Naive thymus-derived CD4-positive, alpha-beta T cell (primary cell): ENCODE measurements at regions of chr2 and their contacts with region 1.

Region 1: GRCh38 chr2:194539425-194539824 is 1117.6 kb upstream of the SLC39A10 start:
- DNase-seq: no peak
- ATAC-seq: no peak
- H3K4me3 ChIP-seq: no peak overlapping the region
- H3K4me3 Mint-ChIP-seq: no peak overlapping the region
- H3K27ac ChIP-seq: no peak overlapping the region
- H3K27ac Mint-ChIP-seq: no peak overlapping the region
- H3K4me1 ChIP-seq: no peaks in the 10 kb centered on the region
- H3K4me1 Mint-ChIP-seq: no peaks in the 10 kb centered on the region
- H3K27me3 ChIP-seq: no peaks in the 10 kb centered on the region
- H3K27me3 Mint-ChIP-seq: peaks cover 0 to 8% (median 3%) of the 10 kb centered on the region in 5 donors

Region 2: DNA sequence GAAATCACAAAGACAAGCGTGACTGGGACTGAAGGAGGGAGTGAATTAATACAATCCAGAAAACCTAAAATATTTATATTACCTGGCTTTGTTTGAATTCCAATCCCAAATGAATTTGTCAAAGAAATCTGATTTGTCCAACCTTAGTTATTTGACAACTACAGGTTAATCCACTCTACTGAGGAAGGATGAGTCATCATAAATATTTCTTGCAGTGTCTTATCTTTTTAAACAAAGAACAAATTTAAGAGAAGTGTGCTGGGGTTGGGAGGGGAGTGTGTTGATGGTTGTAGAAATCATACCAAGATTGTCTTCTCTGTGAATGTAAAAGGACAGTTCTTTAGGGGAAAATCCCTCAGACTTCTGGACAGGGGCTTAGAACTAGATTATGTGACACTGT is 11.3 kb after region 1 on chr2:
- CTCF ChIA-PET with region 1: no interaction called
- POLR2A ChIA-PET with region 1: no interaction called
- intact Hi-C with region 1: no loop called
- DNase-seq: no peak
- ATAC-seq: no peak
- H3K4me3 ChIP-seq: no peak overlapping the region
- H3K4me3 Mint-ChIP-seq: no peak overlapping the region
- H3K27ac ChIP-seq: no peak overlapping the region
- H3K27ac Mint-ChIP-seq: no peak overlapping the region
- H3K4me1 ChIP-seq: no peaks in the 10 kb centered on the region
- H3K4me1 Mint-ChIP-seq: no peaks in the 10 kb centered on the region
- H3K27me3 ChIP-seq: no peaks in the 10 kb centered on the region
- H3K27me3 Mint-ChIP-seq: peaks cover 0 to 6% (median 0%) of the 10 kb centered on the region in 5 donors

Region 3: DNA sequence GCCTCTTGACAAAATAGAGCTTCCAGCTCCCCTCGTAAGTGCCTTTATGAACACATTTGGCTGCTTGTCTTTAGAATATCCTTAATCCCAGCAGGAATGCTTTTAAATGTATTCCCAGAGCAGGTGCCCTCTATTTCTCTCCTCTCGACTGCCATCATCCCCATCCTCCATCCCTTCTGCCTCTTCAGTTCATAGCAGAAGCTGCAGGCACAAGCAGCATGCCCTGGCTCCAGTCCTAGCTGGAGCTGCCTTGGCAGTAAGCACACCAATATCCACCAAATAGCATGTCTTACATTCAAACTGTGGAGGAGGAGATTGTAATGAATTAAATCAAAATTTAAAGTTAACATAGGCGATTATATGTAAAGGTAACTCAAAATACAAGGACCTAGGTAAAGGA is 226.3 kb after region 1 on chr2:
- CTCF ChIA-PET with region 1: no interaction called
- POLR2A ChIA-PET with region 1: no interaction called
- intact Hi-C with region 1: loop called in 1 of 2 experiments (anchors 5 kb)
- DNase-seq: no peak
- ATAC-seq: no peak
- H3K4me3 ChIP-seq: no peak overlapping the region
- H3K4me3 Mint-ChIP-seq: no peak overlapping the region
- H3K27ac ChIP-seq: no peak overlapping the region
- H3K27ac Mint-ChIP-seq: peak overlapping the region in 1 of 9 donors; percentile 42
- H3K4me1 ChIP-seq: no peaks in the 10 kb centered on the region
- H3K4me1 Mint-ChIP-seq: peaks cover 0 to 1% (median 0%) of the 10 kb centered on the region in 7 donors
- H3K27me3 ChIP-seq: no peaks in the 10 kb centered on the region
- H3K27me3 Mint-ChIP-seq: no peaks in the 10 kb centered on the region